Uterus (tissue), 4 donors: ENCODE measurements at regions of chr17 and their contacts with region 1.

Region 1: GRCh38 chr17:46212634-46213435 is 19.6 kb upstream of the KANSL1 start:
- DNase-seq: peak; percentile 62 to 79
- H3K4me3 ChIP-seq: no peak overlapping the region
- H3K27ac ChIP-seq: peak overlapping the region in 1 of 2 donors; percentile 57
- H3K4me1 ChIP-seq: no peaks in the 10 kb centered on the region
- H3K27me3 ChIP-seq: no peaks in the 10 kb centered on the region
- CTCF ChIP-seq: peak; percentile 68 to 88 (median 77)
- POLR2A ChIP-seq: no peak

Region 2: DNA sequence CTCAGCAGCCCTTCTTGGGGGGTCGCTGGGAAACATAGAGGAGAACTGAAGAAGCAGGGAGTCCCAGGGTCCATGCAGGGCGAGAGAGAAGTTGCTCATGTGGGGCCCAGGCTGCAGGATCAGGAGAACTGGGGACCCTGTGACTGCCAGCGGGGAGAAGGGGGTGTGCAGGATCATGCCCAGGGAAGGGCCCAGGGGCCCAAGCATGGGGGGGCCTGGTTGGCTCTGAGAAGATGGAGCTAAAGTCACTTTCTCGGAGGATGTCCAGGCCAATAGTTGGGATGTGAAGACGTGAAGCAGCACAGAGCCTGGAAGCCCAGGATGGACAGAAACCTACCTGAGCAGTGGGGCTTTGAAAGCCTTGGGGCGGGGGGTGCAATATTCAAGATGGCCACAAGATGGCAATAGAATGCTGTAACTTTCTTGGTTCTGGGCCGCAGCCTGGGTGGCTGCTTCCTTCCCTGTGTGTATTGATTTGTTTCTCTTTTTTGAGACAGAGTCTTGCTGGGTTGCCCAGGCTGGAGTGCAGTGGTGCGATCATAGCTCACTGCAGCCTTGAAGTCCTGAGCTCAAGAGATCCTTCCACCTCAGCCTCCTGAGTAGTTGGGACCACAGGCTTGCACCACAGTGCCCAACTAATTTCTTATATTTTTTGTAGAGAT is 210.4 kb before region 1 on chr17:
- intact Hi-C with region 1: loop called (anchors 5 kb)
- DNase-seq: peak; percentile 65 to 68
- H3K4me3 ChIP-seq: no peak overlapping the region
- H3K27ac ChIP-seq: no peak overlapping the region
- H3K4me1 ChIP-seq: no peaks in the 10 kb centered on the region
- H3K27me3 ChIP-seq: no peaks in the 10 kb centered on the region
- CTCF ChIP-seq: peak; percentile 94 to 97 (median 94)
- POLR2A ChIP-seq: no peak

Region 3: DNA sequence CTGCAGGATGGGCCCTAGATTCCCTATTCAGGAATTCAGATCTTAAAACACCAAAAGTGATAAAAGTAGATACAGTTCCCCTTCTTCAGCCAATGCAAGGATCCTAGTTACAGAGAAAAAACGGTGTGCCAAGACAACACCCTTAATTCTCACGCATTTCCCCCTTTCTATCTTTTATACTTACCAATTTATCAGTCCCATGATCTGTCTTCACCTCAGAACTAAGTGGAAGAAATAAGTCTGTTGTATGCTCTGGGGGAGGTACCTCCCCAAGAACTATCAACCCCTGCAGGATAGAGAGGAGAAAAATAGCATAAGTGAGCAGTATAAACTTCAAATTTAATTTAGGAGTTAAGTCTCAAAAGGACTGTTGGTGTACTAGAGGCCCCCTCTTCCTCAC is 130.6 kb before region 1 on chr17:
- intact Hi-C with region 1: no loop called
- DNase-seq: no peak
- H3K4me3 ChIP-seq: no peak overlapping the region
- H3K27ac ChIP-seq: no peak overlapping the region
- H3K4me1 ChIP-seq: peaks cover 5% of the 10 kb centered on the region in 2 donors
- H3K27me3 ChIP-seq: no peaks in the 10 kb centered on the region
- CTCF ChIP-seq: no peak
- POLR2A ChIP-seq: no peak

Region 4: DNA sequence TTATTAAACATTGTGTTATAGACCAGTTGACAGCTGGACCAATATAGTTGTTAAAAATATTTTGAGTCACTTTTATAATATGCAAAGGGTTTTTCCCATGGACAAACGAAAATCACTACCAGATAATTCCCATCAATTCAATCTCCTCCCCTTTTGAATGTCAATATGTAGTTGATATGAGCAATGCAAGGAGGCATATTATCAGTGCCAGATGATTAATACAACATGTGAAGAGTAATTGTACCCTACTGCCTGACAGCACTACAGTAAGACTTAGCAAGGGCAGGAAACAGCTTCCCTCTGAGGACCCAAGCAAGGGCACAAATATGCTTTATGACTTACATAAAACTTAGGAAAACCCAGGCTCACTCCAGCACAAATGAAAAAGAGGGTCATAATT is 36.9 kb before region 1 on chr17:
- intact Hi-C with region 1: no loop called
- DNase-seq: no peak
- H3K4me3 ChIP-seq: no peak overlapping the region
- H3K27ac ChIP-seq: no peak overlapping the region
- H3K4me1 ChIP-seq: peaks cover 5 to 15% of the 10 kb centered on the region in 2 donors
- H3K27me3 ChIP-seq: no peaks in the 10 kb centered on the region
- CTCF ChIP-seq: no peak
- POLR2A ChIP-seq: no peak